H1 (cell line): ENCODE measurements at regions of chr17 and their contacts with region 1.

Region 1: GRCh38 chr17:41811549-41812380 is at the start of gene P3H4:
- DNase-seq: peak in 1 of 2 experiments; percentile 93
- H3K4me3 ChIP-seq: peak within 1 kb of the TSS; percentile 70 to 94 (median 81)
- H3K27ac ChIP-seq: peak within 1 kb of the TSS; percentile 65; the same call in 1 of the 2 replicates
- H3K4me1 ChIP-seq: peaks cover 0 to 23% (median 7%) of the 10 kb centered on the region in 4 experiments; a peak in 6 of 7 replicates
- H3K27me3 ChIP-seq: peaks cover 0 to 6% (median 3%) of the 10 kb centered on the region in 4 experiments; a peak in 4 of 7 replicates
- CTCF ChIP-seq: peak; percentile 60 to 83 (median 70)
- EP300 ChIP-seq: no peak
- POLR2A ChIP-seq: 0 out of 3 replicates have a peak, but pooled peaks of 1 of the 2 experiments have one; percentile 20
- RAD21 ChIP-seq: peak; percentile 47 to 59
- total RNA-seq, gene P3H4: 22.6 and 23.4 TPM in 2 replicates

Region 2: GRCh38 chr17:41738077-41738735 is 73.6 kb before region 1 on chr17:
- CTCF ChIA-PET with region 1: interaction called, 13 read pairs
- POLR2A ChIA-PET with region 1: interaction called, 21 read pairs
- DNase-seq: peak; percentile 69 to 95
- H3K4me3 ChIP-seq: no peak overlapping the region
- H3K27ac ChIP-seq: peak overlapping the region; percentile 79
- H3K4me1 ChIP-seq: peaks cover 0 to 11% (median 8%) of the 10 kb centered on the region in 4 experiments; a peak in 6 of 7 replicates
- H3K27me3 ChIP-seq: peaks cover 13 to 45% (median 33%) of the 10 kb centered on the region in 4 experiments
- CTCF ChIP-seq: peak; percentile 97 to 99 (median 98)
- EP300 ChIP-seq: 0 out of 3 replicates have a peak, but pooled peaks of 1 of the 2 experiments have one; percentile 34
- POLR2A ChIP-seq: 0 out of 3 replicates have a peak, but pooled peaks of 1 of the 2 experiments have one; percentile 19
- RAD21 ChIP-seq: peak; percentile 99 to 100

Region 3: DNA sequence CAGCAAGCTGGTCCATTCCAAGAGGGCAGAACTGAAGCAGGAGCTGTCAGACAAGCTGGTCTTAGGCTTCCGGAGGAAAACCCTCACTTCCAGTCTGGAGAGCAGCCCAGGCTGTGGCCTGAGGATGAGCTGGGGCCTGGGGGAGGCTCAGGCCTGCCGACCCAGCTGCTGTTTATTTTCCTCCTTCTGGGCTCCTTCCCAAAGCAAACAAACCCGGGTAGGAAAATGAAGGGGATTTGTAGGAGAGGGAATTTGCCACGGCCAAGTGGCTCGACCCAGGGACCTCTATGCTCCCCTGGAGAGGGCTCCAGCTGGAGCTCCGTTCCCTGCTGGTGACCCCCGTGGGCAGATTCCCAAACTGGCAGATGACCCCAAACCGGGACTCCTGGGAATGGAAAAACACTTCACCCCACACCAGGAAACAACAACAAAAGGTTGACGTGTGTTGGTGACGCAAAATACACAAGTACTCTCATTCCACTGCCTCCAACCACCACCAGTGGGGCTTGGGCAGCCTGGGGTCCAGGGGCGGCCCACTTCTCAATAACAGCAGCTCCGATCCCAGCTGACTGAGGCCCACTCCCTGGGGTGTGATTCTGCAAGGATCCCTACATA is 34.1 kb before region 1 on chr17:
- CTCF ChIA-PET with region 1: interaction called, 17 read pairs
- POLR2A ChIA-PET with region 1: interaction called, 4 read pairs
- DNase-seq: no peak
- H3K4me3 ChIP-seq: no peak overlapping the region
- H3K27ac ChIP-seq: no peak overlapping the region
- H3K4me1 ChIP-seq: peaks cover 0 to 49% (median 29%) of the 10 kb centered on the region in 4 experiments; a peak in 6 of 7 replicates
- H3K27me3 ChIP-seq: no peaks in the 10 kb centered on the region
- CTCF ChIP-seq: no peak
- EP300 ChIP-seq: no peak
- POLR2A ChIP-seq: no peak
- RAD21 ChIP-seq: no peak

Region 4: DNA sequence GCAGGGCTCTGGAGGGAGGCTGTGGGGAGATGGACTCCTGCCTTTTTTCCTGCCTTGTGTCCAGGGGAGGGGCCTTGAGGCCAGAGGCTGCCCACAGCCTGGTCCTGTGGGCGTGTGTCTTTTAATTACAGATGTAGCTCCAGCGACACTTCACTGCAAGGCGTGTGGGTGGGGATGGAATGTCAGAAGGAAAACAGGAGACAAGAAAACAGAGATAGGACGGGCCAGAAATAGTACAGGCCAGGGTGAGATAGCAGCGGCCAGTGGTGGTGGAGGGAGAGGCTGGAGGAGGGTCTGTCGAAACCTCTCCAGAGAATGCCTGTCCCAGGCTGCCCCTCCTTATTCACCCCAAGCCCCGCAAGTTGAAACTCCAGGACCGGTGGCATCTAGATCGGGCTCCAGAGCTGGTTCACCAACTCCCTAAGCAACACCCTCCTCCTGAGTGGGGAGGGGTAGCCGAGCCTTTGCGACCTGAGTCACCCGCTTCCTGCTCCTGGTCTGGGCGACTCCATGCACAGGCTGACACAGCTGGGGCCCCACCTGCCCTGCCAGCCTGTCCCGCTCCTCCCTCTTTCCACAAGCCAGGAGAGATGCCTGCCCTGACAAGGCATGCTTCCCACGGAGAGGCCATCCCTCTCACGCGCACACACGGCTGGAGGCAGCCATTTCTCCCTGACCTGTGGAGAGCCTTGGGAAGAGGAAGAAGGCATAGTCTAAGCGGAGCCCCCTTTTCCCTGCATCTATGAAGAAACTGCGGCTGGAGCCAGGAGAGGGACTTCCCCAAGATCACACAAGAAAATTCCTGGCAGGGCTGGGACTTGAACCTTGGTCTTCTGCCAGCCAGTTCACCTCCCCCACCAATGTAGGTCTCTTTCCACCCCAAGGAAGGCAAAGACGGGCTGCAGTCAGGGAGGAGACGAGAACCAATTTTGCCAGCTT is 18.7 kb before region 1 on chr17:
- CTCF ChIA-PET with region 1: interaction called, 5 read pairs
- POLR2A ChIA-PET with region 1: interaction called, 38 read pairs
- DNase-seq: no peak
- H3K4me3 ChIP-seq: peak overlapping the region in 3 of 4 experiments; percentile 15 to 47 (median 29); a peak in 5 of 8 replicates
- H3K27ac ChIP-seq: no peak overlapping the region; the same call in 1 of the 2 replicates
- H3K4me1 ChIP-seq: peaks cover 6 to 19% (median 15%) of the 10 kb centered on the region in 4 experiments
- H3K27me3 ChIP-seq: peaks cover 0 to 4% (median 2%) of the 10 kb centered on the region in 4 experiments; a peak in 4 of 7 replicates
- CTCF ChIP-seq: no peak
- EP300 ChIP-seq: no peak
- POLR2A ChIP-seq: no peak
- RAD21 ChIP-seq: no peak

Region 5: GRCh38 chr17:41824086-41824485 is 12.3 kb after region 1 on chr17:
- CTCF ChIA-PET with region 1: interaction called, 16 read pairs
- POLR2A ChIA-PET with region 1: interaction called, 40 read pairs
- DNase-seq: no peak
- H3K4me3 ChIP-seq: no peak overlapping the region
- H3K27ac ChIP-seq: no peak overlapping the region
- H3K4me1 ChIP-seq: peaks cover 0 to 13% (median 9%) of the 10 kb centered on the region in 4 experiments; a peak in 6 of 7 replicates
- H3K27me3 ChIP-seq: no peaks in the 10 kb centered on the region
- CTCF ChIP-seq: no peak
- EP300 ChIP-seq: no peak
- POLR2A ChIP-seq: no peak
- RAD21 ChIP-seq: no peak